ENCODE measurements at regions of chr9 and their contacts with region 1.

Region 1: GRCh38 chr9:74952281-74953151 is at the start of gene C9orf40:
- DNase-seq: peak; percentile 91
- H3K4me3 Mint-ChIP-seq: peak within 1 kb of the TSS; percentile 86
- H3K27ac Mint-ChIP-seq: peak within 1 kb of the TSS; percentile 94
- H3K4me1 Mint-ChIP-seq: peaks cover 48% of the 10 kb centered on the region
- H3K27me3 Mint-ChIP-seq: no peaks in the 10 kb centered on the region
- total RNA-seq, gene C9orf40: 20.1 to 22.2 TPM

Region 2: GRCh38 chr9:74940600-74940999 is 11.9 kb before region 1 on chr9:
- CTCF ChIA-PET with region 1: interaction called, 17 read pairs
- POLR2A ChIA-PET with region 1: interaction called, 3 read pairs
- DNase-seq: no peak
- H3K4me3 Mint-ChIP-seq: no peak overlapping the region
- H3K27ac Mint-ChIP-seq: no peak overlapping the region
- H3K4me1 Mint-ChIP-seq: peaks cover 13% of the 10 kb centered on the region
- H3K27me3 Mint-ChIP-seq: peaks cover 3% of the 10 kb centered on the region

Region 3: GRCh38 chr9:75027187-75028107 is 74.9 kb after region 1 on chr9:
- CTCF ChIA-PET with region 1: interaction called, 22 read pairs
- POLR2A ChIA-PET with region 1: interaction called, 3 read pairs
- DNase-seq: peak; percentile 45
- H3K4me3 Mint-ChIP-seq: peak overlapping the region; percentile 98
- H3K27ac Mint-ChIP-seq: peak overlapping the region; percentile 97
- H3K4me1 Mint-ChIP-seq: peaks cover 42% of the 10 kb centered on the region
- H3K27me3 Mint-ChIP-seq: no peaks in the 10 kb centered on the region

Measured in activated CD4-positive, alpha-beta T cell treated with anti-CD3 and anti-CD28 coated beads, Interleukin-2, amount 10 ng/mL, durations not matched to agents 7 days and 5 days (primary cell).